Prostate gland (tissue), 2 donors: ENCODE measurements at regions of chr6 and their contacts with region 1.

Region 1: DNA sequence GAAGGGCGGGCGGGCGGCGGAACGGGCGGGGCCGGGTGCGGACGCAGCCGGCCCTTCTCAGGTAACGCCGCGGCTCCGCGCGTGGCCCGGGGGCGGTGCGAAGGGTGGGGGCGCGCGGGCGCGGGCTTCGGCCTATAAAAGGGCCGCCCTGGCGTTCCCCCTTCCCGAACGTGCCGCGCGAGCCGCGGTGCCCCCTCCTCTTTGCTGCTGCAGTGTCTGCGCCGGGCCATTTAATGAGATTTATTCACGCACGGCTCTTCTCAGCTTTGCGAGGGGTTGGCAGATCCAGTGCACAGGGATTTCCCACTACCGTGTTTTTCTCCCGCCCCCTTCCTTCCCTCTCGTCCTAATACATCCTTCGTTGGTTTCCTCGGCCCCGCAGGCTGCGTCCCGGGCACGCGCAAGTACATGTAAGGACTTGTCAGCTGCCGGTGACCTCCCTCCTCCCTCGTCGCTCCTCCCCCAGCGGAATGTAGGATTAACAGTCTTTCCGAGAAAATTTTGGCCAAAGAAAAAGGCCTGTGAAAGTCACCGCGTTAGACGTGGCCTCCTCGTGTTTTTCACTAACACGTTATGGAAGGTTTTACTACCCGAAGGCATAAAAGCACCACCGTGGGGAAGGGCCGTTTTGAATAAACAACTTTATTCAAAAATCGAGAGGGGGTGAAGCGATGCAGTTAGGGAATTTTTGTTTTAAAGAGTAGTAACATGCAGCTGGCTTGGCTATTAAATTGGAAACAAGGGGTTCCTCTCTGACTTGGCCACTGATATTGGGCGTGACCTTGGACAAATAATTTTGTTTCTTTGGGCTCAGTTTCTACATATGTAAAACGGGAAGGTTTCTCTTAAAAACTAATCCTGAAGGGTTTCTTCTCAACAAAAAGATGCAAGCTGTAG is 966 bp upstream of the REV3L start:
- DNase-seq: peak; percentile 91
- H3K4me3 ChIP-seq: peak overlapping the region; percentile 89 to 92
- H3K27ac ChIP-seq: peak overlapping the region; percentile 99 to 100
- H3K4me1 ChIP-seq: peaks cover 2% of the 10 kb centered on the region
- H3K27me3 ChIP-seq: no peaks in the 10 kb centered on the region
- CTCF ChIP-seq: no peak
- POLR2A ChIP-seq: peak; percentile 34

Region 2: DNA sequence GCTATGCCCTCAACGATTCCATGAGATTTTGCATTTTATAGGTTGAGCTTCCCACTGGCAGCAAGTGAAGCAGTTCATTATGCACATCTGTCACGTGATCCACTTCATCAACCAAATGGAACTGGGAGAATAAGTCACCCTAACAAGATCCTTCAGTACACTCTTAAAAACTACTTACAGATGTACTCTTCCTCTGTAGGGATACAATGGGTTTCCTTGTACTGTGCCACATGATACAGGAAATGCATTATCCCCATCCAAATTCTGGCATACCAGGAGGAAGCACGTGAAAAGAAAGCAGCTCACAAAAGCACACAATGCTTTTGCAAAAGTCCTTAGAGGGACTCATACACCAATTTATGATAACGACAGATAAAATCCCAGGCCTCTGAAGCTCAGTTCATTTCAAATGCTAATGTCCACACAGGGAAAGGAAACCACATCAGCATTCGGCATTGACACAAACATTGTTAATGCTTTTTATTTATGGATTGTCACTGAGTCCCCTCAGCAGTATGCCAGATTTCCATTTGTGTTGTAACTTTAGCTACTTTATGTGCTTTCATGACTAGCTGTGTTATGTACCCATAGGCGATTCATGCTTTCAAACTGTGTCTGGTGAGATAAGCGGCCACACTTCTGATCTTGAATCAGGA is 57.2 kb after region 1 on chr6:
- intact Hi-C with region 1: no loop called
- DNase-seq: no peak
- H3K4me3 ChIP-seq: no peak overlapping the region
- H3K27ac ChIP-seq: peak overlapping the region in 1 of 2 donors; percentile 0
- H3K4me1 ChIP-seq: no peaks in the 10 kb centered on the region
- H3K27me3 ChIP-seq: no peaks in the 10 kb centered on the region
- CTCF ChIP-seq: no peak
- POLR2A ChIP-seq: no peak

Region 3: DNA sequence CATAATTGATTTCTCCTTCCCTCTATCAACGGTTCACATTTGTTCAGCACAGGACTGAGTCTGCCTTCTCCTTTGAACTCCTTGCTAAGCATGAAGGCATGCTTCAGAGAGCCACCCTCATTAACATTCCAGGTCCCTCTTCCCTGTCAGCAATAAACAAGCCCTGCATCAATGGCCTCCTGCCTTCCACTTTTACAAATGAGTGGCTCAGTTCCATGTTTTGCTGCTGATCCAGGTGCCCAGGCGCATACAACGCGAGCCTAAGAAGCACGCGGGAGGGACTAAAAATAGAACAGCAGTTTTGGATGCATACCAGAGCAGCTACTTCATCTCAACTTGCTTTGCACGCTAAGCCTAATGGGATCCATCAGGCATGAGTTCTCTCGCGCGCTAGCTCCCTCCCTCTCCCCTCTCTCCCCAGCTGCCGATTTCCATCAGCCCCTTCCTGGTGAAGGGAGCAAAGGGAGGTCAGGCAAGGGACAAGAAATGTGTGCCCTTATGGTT is 68.3 kb after region 1 on chr6:
- intact Hi-C with region 1: loop called (anchors 5 kb)
- DNase-seq: peak; percentile 72
- H3K4me3 ChIP-seq: no peak overlapping the region
- H3K27ac ChIP-seq: peak overlapping the region; percentile 67 to 68
- H3K4me1 ChIP-seq: peaks cover 6% of the 10 kb centered on the region
- H3K27me3 ChIP-seq: no peaks in the 10 kb centered on the region
- CTCF ChIP-seq: no peak
- POLR2A ChIP-seq: no peak

Region 4: DNA sequence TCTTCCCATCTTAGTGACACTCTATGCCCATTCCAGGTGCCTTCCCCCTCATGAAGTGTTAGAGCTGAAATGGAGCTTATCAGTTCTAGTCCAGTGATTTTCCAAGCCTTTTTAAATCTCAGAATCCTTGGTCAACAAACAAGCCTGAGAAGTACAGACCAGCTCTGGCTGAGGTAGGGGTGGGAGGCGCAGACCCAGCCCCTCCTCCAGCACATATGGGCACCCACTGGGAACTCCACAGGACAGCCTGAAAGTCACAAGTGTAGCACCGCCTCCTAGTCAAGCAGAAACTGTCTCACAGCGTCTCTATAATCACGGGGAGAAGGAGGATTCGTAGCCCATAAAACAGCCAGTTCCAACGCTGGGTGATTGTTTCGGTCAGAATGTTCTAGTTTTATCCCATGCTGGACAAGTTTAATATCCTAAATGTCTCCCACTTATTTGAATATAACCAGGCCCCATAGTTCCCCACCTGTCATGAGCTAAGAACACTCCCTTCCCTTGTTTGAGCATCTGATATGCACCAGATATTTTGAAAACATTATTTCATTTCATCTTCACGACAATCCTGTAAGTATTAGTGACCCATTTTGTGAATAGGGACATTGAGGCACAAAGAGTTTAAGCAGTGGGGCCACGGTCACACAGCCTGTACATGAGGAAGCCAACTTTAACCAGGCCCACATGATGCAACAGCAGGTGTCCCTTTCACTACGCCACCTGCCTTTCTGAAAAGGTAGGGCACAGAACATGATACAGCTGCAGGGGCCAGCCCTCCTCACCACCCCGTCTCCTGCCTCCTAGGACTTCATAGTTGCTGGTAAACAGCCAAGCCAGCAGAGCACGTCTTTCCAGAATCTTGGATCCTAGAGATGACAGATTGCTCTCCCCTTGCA is 81.6 kb after region 1 on chr6:
- intact Hi-C with region 1: loop called (anchors 5 kb)
- DNase-seq: no peak
- H3K4me3 ChIP-seq: no peak overlapping the region
- H3K27ac ChIP-seq: peak overlapping the region; percentile 71
- H3K4me1 ChIP-seq: peaks cover 13% of the 10 kb centered on the region
- H3K27me3 ChIP-seq: no peaks in the 10 kb centered on the region
- CTCF ChIP-seq: peak in 2 of 4 experiments; percentile 24 to 32
- POLR2A ChIP-seq: no peak

Region 5: DNA sequence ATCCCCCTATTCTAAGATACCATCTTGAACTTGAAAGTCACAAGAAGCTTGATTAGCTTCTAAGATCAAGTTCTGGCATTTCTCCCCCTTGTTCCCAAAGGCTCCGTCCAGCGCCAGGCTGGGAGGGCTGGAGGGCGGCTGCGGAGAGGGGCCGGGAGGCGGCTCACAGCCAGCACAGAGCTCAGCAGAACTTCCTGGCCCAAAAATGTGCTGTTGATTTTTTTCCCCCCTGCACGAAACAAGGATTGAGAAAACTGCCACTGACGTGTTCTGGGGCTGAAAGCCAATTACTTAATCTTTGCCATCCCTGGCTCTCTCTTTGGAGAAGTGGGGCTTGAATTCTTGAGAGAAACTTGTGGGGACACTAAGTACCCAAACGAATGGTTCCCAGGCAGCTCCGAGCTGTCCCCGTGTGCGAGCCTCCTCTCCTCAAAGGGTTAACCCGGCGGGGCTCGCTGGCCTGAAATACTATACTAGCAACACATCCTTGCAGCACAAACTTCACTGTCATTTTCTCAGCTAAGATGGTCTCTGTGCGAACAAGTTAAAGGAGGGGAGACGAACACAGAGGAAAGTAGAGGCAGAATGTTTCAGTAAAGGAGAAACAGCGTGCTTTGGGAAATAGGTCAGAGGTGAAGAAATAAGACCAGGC is 121.2 kb after region 1 on chr6:
- intact Hi-C with region 1: loop called (anchors 1 kb)
- DNase-seq: peak; percentile 58
- H3K4me3 ChIP-seq: peak overlapping the region; percentile 45 to 52
- H3K27ac ChIP-seq: peak overlapping the region; percentile 88 to 90
- H3K4me1 ChIP-seq: peaks cover 28% of the 10 kb centered on the region
- H3K27me3 ChIP-seq: no peaks in the 10 kb centered on the region
- CTCF ChIP-seq: no peak
- POLR2A ChIP-seq: peak; percentile 16

Region 6: DNA sequence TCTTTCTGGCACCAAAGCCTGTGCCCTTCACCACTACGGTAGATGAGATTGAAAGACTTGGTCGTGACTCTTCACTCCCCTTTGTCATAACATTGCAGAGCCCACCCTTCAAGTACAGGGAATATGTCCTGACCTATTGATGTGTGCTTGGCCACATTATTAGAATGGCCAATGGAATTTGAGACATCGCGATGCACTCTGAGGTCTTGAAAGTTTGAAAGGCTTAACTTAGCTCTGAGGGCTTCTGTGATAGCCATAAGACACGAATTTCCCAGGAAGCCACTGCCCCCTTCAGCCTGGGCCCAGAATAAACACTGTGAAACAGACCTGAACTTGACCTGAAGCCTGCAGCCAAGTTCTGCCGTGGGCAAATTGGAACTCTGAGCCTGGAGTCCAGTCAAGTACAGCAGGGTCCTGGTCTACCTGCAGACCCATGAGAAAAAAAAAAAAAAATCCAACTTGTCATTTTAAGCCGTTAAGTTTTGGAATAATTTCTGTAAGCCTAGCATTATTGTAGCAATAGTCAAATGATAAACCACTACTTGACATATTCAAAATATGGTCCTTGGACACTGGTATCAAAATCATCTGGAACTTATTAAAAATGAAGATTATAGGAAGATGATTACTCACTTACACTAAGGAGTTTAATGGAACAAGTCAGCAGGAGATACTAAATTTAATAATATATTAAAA is 158.6 kb after region 1 on chr6:
- intact Hi-C with region 1: loop called (anchors 10 kb)
- DNase-seq: no peak
- H3K4me3 ChIP-seq: no peak overlapping the region
- H3K27ac ChIP-seq: no peak overlapping the region
- H3K4me1 ChIP-seq: no peaks in the 10 kb centered on the region
- H3K27me3 ChIP-seq: no peaks in the 10 kb centered on the region
- CTCF ChIP-seq: peak in 2 of 4 experiments; percentile 55
- POLR2A ChIP-seq: no peak

Region 7: GRCh38 chr6:111873178-111874024 is 389.4 kb after region 1 on chr6 and contains the start of gene FYN:
- intact Hi-C with region 1: loop called (anchors 10 kb)
- DNase-seq: peak; percentile 97
- H3K4me3 ChIP-seq: peak within 1 kb of the TSS; percentile 47 to 52
- H3K27ac ChIP-seq: peak within 1 kb of the TSS; percentile 56 to 58
- H3K4me1 ChIP-seq: peaks cover 3% of the 10 kb centered on the region
- H3K27me3 ChIP-seq: no peaks in the 10 kb centered on the region
- CTCF ChIP-seq: peak in 2 of 4 experiments; percentile 62 to 69
- POLR2A ChIP-seq: peak; percentile 74
- total RNA-seq, gene FYN: 13.7 to 103 TPM